ENCODE measurements at regions of chr6 and their contacts with region 1.

Region 1: DNA sequence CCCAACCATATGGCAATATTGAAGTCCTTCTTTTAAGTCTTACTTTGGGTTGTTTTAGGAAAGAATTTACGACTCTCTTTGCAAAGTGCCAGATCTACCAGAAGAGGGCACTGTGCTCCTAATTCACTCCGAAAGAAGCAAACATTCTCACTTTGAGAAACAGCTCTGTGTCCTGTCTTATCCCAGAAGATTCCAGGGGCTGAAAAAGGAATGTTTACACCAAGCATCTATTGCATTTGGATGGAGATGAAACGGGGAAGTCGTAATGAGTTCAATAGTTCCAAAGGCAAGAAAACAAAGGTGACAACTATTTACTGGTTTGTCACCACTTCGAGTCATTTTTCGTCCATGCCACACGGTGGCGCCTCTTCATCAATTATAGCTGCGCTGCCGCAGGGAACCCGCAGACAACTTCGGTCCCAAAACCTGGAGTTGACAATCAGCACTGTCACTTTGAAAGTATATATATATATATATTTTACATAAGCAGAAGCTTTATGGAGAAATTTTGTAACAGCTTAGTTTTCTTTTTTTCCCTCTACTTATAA is 121.6 kb downstream of the MOXD1 start:
- DNase-seq: peak; percentile 77
- H3K4me3 Mint-ChIP-seq: peak overlapping the region; percentile 45
- H3K27ac Mint-ChIP-seq: no peak overlapping the region
- H3K4me1 Mint-ChIP-seq: no peaks in the 10 kb centered on the region
- H3K27me3 Mint-ChIP-seq: peaks cover 12% of the 10 kb centered on the region

Region 2: DNA sequence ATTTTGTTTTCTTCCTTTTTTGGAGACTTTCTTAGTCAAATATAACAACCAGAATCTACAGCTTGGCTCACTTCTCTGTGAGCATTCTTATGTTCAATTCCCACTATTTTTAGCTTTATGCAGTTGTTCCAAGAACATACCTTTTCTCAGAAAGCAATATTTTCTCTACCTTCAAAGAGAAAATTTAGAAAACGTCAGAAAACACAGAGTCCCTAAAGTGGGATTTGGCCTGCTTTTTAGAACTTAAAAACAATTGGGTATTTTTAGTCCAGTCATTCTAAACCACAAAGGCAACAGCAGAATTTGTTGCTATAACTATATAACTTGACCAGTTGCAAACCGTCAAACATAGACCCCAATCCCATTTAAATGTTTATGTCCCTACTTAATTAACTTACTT is 11.5 kb before region 1 on chr6:
- CTCF ChIA-PET with region 1: interaction called, 10 read pairs
- POLR2A ChIA-PET with region 1: no interaction called
- DNase-seq: no peak
- H3K4me3 Mint-ChIP-seq: no peak overlapping the region
- H3K27ac Mint-ChIP-seq: no peak overlapping the region
- H3K4me1 Mint-ChIP-seq: no peaks in the 10 kb centered on the region
- H3K27me3 Mint-ChIP-seq: peaks cover 10% of the 10 kb centered on the region

Region 3: DNA sequence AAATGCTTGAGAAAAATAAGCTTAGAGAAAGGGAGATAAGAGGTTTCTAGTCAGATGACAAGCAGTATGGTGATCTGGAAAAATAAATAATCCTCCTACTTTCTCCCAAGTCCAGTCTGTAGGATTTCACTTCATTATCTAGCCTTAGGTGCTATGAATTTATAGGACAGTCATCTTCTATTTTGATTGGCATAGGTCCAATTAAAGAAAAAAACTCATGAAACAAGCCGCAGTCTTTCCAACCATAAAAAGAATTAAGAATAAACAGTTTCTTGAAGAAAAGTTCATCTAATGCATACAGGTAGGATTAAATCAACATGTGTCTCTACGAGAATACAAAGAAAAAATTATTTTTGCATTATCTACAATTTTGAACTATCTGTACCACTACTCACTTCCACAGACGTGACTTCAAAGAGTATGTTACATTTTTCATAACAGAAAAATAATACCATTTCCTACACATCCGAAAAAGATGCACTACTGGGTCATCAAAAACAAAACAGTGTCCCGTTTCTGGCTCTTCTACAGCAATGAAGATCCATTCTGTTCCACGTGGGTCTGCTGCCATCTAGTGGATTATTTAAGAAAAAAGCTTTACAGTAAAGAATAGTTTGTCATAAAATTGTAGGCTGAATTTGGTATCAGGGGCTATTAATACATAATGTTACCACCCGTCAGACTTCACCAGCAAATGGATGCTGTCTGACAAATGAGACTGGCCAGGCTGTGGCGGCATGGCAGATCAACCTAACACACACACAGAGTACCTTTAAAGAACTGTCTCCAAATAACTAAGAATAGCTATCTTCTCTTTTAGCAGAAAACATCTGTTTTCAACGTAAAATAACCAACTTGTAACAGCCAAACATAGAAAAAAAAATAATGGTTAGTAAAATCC is 204.4 kb after region 1 on chr6:
- CTCF ChIA-PET with region 1: interaction called, 14 read pairs
- POLR2A ChIA-PET with region 1: no interaction called
- DNase-seq: peak; percentile 73
- H3K4me3 Mint-ChIP-seq: no peak overlapping the region
- H3K27ac Mint-ChIP-seq: no peak overlapping the region
- H3K4me1 Mint-ChIP-seq: peaks cover 18% of the 10 kb centered on the region
- H3K27me3 Mint-ChIP-seq: no peaks in the 10 kb centered on the region